ENCODE measurements at regions of chr13 and their contacts with region 1.

Region 1: GRCh38 chr13:23871616-23872220 is 17.5 kb downstream of the MIPEP start:
- DNase-seq: no peak
- ATAC-seq: no peak
- H3K4me3 Mint-ChIP-seq: no peak overlapping the region
- H3K27ac Mint-ChIP-seq: no peak overlapping the region
- H3K4me1 Mint-ChIP-seq: peaks cover 14% of the 10 kb centered on the region
- H3K27me3 Mint-ChIP-seq: no peaks in the 10 kb centered on the region
- CTCF ChIP-seq: peak; percentile 78

Region 2: DNA sequence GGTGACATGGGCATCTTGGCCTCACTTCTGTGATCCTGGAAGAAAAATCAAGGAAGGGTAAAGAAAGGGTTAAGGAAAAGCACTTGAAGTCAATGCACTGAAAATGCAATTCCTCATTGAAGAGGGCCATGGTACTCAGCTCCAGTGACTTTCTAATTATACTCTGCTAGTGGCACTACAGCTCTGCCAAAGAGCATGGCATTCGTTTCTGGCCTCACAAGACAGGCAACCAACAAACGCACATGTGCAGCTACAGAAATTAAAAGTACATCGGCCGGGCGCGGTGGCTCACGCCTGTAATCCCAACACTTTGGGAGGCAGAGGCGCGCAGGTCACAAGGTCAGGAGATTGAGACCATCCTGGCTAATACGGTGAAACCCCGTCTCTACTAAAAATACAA is 460.0 kb before region 1 on chr13:
- CTCF ChIA-PET with region 1: no interaction called
- POLR2A ChIA-PET with region 1: no interaction called
- intact Hi-C with region 1: loop called (anchors 1 kb)
- DNase-seq: no peak
- ATAC-seq: no peak
- H3K4me3 Mint-ChIP-seq: no peak overlapping the region
- H3K27ac Mint-ChIP-seq: no peak overlapping the region
- H3K4me1 Mint-ChIP-seq: peaks cover 2% of the 10 kb centered on the region
- H3K27me3 Mint-ChIP-seq: peaks cover 9% of the 10 kb centered on the region
- CTCF ChIP-seq: no peak

Region 3: GRCh38 chr13:23510979-23511735 is 360.6 kb before region 1 on chr13:
- CTCF ChIA-PET with region 1: no interaction called
- POLR2A ChIA-PET with region 1: no interaction called
- intact Hi-C with region 1: loop called (anchors 1 kb)
- DNase-seq: no peak
- ATAC-seq: no peak
- H3K4me3 Mint-ChIP-seq: no peak overlapping the region
- H3K27ac Mint-ChIP-seq: no peak overlapping the region
- H3K4me1 Mint-ChIP-seq: no peaks in the 10 kb centered on the region
- H3K27me3 Mint-ChIP-seq: peaks cover 41% of the 10 kb centered on the region
- CTCF ChIP-seq: no peak

Region 4: GRCh38 chr13:23667750-23668149 is 204.0 kb before region 1 on chr13:
- CTCF ChIA-PET with region 1: no interaction called
- POLR2A ChIA-PET with region 1: no interaction called
- intact Hi-C with region 1: loop called (anchors 5 kb)
- DNase-seq: no peak
- ATAC-seq: no peak
- H3K4me3 Mint-ChIP-seq: no peak overlapping the region
- H3K27ac Mint-ChIP-seq: no peak overlapping the region
- H3K4me1 Mint-ChIP-seq: no peaks in the 10 kb centered on the region
- H3K27me3 Mint-ChIP-seq: peaks cover 8% of the 10 kb centered on the region
- CTCF ChIP-seq: no peak

Region 5: GRCh38 chr13:23810685-23811240 is 61.0 kb before region 1 on chr13:
- CTCF ChIA-PET with region 1: no interaction called
- POLR2A ChIA-PET with region 1: no interaction called
- intact Hi-C with region 1: loop called (anchors 2 kb)
- DNase-seq: no peak
- ATAC-seq: peak; percentile 68
- H3K4me3 Mint-ChIP-seq: peak overlapping the region; percentile 20
- H3K27ac Mint-ChIP-seq: no peak overlapping the region
- H3K4me1 Mint-ChIP-seq: peaks cover 53% of the 10 kb centered on the region
- H3K27me3 Mint-ChIP-seq: no peaks in the 10 kb centered on the region
- CTCF ChIP-seq: no peak

Measured in activated B cell treated with CpG ODN at 0.5 μM for 24 hours (primary cell).